GM12878 (cell line): ENCODE measurements at regions of chr12 and their contacts with region 1.

Region 1: GRCh38 chr12:18304609-18305008 is 43.3 kb downstream of the PIK3C2G start:
- DNase-seq: no peak
- ATAC-seq: no peak
- H3K4me3 ChIP-seq: no peak overlapping the region
- H3K27ac ChIP-seq: no peak overlapping the region
- H3K4me1 ChIP-seq: no peaks in the 10 kb centered on the region
- H3K27me3 ChIP-seq: no peaks in the 10 kb centered on the region
- CTCF ChIP-seq: no peak
- EP300 ChIP-seq: no peak
- POLR2A ChIP-seq: no peak
- RAD21 ChIP-seq: no peak

Region 2: DNA sequence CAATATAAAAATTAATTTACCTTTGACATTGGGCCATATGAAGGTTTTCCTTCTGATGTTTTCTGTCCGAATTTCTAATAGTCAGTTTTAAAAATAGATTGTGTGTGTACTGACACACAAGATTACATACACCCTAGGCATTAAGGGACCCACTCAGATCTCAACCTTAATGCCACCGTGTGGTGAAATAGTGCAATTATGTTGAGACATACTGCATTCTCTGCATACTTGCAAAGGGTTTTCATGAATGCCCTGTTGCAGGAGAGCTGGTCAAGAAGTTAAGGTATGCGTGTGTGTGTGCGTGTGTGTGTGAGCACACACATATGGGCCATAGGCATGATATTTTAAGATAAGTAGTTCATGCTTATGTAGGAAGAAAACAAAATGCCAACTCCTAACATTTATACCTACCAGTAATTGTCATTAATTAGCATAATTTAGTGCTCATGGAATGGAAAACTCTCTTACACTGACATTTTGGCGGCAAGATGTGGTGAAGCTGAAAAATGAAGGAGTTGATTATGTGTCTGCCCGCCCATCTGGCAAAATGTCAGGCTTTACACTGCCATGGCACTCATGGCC is 15.5 kb after region 1 on chr12:
- CTCF ChIA-PET with region 1: interaction called, 11 read pairs
- POLR2A ChIA-PET with region 1: no interaction called
- RAD21 ChIA-PET with region 1: no interaction called
- SMC1A ChIA-PET with region 1: interaction called, 4 read pairs
- in situ Hi-C with region 1: no loop called
- intact Hi-C with region 1: no loop called
- DNase-seq: no peak
- ATAC-seq: peak; percentile 90
- H3K4me3 ChIP-seq: no peak overlapping the region
- H3K27ac ChIP-seq: no peak overlapping the region
- H3K4me1 ChIP-seq: no peaks in the 10 kb centered on the region
- H3K27me3 ChIP-seq: no peaks in the 10 kb centered on the region
- CTCF ChIP-seq: peak; percentile 26 to 45 (median 42); a peak in 4 of 6 replicates
- EP300 ChIP-seq: no peak
- POLR2A ChIP-seq: no peak
- RAD21 ChIP-seq: peak; percentile 43; the same call in 1 of the 2 replicates